Posterior vena cava (tissue), 2 donors: ENCODE measurements at regions of chr7 and their contacts with region 1.

Region 1: GRCh38 chr7:150384406-150385301 is 5.5 kb downstream of the ZNF775 start:
- DNase-seq: peak; percentile 55

Region 2: GRCh38 chr7:149753401-149754233 is 631.0 kb before region 1 on chr7:
- intact Hi-C with region 1: no loop called
- DNase-seq: no peak

Region 3: DNA sequence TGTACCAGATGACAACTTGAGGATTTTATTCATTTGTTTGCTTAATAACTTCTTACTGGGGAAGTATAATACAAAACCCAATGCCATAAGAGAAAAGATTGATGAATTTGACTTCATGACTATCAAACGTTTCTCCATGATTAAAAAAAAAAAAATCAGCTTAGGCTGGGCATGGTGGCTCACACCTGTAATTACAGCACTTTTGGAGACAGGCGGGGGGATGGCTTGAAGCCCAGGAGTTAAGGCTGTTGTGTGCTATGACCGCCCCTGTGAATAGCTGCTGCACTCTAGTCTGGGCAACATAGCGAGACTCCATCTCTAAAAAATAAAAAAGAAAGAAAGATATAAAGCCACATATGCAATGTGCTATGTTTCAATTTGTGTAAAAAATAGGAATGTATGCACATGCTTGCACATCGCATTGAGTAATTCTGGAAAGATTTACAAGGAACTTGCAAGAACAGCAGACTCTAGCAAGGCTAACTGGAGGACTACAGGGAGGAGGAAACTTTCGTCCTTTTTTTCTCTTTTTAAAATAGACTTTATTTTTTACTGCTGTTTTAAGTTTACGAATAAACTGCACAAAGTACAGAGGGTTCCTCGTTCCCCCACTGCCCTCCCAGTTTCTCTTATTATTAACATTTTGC is 33.0 kb before region 1 on chr7:
- intact Hi-C with region 1: loop called in 1 of 2 experiments (anchors 1 kb)
- DNase-seq: no peak